HepG2 (cell line): ENCODE measurements at regions of chr7 and their contacts with region 1.

Region 1: DNA sequence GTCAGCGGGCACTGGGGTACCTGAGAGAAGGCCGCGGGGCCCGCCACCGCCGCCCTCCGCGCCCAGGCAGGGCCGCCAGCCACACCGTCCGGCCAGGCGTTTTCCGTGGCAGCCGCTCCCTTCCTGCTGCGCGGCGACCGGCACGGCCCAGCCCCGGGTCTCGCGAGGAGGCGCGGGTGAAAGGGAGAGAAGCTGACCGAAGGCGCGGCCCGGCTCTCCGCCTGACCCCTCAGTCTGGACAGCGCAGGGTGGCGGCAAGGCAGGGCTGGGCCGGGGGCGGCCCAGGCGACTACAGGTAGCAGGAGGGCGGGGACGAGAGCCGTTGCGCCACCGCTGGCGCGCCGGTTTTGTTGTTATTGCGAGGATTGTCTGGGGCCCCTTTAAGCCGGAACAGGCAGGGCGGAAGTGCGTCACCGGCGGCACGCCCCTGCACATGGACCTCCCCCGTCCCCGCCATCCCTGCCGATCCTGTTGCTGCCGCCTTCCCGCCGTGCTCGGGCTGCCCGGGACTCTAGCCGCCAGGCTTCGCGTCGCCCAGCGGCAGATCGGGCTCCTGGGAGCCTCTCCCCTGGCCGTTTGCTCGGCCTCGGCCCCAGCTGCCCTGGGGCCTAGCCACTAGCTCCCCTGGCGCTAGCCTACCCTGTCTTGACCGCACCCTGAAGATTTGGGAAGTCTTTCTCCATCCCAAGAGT is at the start of gene HERPUD2:
- DNase-seq: peak; percentile 88
- ATAC-seq: peak; percentile 95
- H3K4me3 ChIP-seq: peak within 1 kb of the TSS; percentile 78 to 97 (median 89)
- H3K27ac ChIP-seq: peak within 1 kb of the TSS; percentile 90
- H3K4me1 ChIP-seq: peaks cover 54% of the 10 kb centered on the region
- H3K27me3 ChIP-seq: no peaks in the 10 kb centered on the region; a peak in 1 of 5 replicates
- CTCF ChIP-seq: peak; percentile 32; the same call in 1 of the 2 replicates
- EP300 ChIP-seq: peak; percentile 14 to 24; a peak in 1 of 4 replicates
- POLR2A ChIP-seq: peak; percentile 74 to 89
- RAD21 ChIP-seq: no peak
- total RNA-seq, gene HERPUD2: 10.4 and 10.7 TPM in 2 replicates

Region 2: DNA sequence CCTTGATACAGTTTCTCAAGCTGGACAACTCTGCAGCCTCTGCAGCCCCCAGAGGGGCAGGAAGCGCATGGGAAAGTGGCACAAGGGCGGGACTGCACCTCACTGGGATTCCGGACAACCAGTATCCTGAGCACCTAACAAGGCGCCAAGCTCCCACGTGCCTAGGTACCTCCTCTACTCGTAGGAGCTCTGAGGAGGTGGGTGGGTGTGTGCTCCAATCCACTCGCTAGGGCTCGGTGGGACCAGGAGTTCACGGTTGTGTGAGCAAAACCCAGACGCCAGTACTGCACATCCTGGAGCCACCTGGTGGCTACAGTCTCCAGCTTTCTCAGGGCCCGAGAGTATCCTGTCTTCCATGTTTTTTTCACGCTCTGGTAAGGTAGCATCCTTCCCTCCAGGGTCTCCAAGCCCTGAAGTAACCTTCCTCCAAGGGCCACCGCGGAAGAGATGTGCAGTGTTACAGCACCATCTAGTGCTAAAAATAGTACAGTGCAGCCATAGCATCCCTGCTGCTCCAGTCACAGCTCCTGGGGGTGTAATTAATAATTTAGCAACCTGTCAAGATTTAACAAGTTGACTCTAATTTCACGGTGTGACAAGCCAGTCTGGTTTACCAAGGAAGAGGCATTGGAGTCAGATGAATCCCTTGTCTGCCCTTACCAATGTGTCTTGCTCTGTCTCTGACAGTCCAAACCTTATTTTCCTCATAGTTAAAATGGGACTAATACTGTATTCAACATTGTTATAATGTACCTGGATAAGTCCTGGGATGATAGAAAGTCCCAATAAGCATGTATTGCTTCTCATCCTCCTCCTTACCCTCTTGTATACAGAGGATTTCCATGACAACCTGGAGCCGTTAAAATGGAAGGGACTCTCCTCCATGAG is 70.4 kb before region 1 on chr7:
- CTCF ChIA-PET with region 1: no interaction called
- POLR2A ChIA-PET with region 1: no interaction called
- in situ Hi-C with region 1: no loop called
- intact Hi-C with region 1: no loop called
- DNase-seq: peak; percentile 31
- ATAC-seq: peak; percentile 93
- H3K4me3 ChIP-seq: peak overlapping the region in 1 of 3 experiments; percentile 17; a peak in 1 of 6 replicates
- H3K27ac ChIP-seq: no peak overlapping the region
- H3K4me1 ChIP-seq: peaks cover 7% of the 10 kb centered on the region
- H3K27me3 ChIP-seq: no peaks in the 10 kb centered on the region
- CTCF ChIP-seq: peak; percentile 87
- EP300 ChIP-seq: no peak
- POLR2A ChIP-seq: no peak
- RAD21 ChIP-seq: peak; percentile 77

Region 3: GRCh38 chr7:35647171-35647574 is 47.8 kb before region 1 on chr7:
- CTCF ChIA-PET with region 1: no interaction called
- POLR2A ChIA-PET with region 1: interaction called, 5 read pairs
- in situ Hi-C with region 1: no loop called
- intact Hi-C with region 1: loop called (anchors 2 kb)
- DNase-seq: peak; percentile 81
- ATAC-seq: peak; percentile 96
- H3K4me3 ChIP-seq: peak overlapping the region in 1 of 3 experiments; percentile 21; a peak in 1 of 6 replicates
- H3K27ac ChIP-seq: peak overlapping the region; percentile 59
- H3K4me1 ChIP-seq: peaks cover 30% of the 10 kb centered on the region
- H3K27me3 ChIP-seq: no peaks in the 10 kb centered on the region
- CTCF ChIP-seq: no peak
- EP300 ChIP-seq: peak in 1 of 2 experiments; percentile 16; a peak in 1 of 4 replicates
- POLR2A ChIP-seq: no peak
- RAD21 ChIP-seq: no peak